ENCODE measurements at regions of chr10 and their contacts with region 1.

Region 1: DNA sequence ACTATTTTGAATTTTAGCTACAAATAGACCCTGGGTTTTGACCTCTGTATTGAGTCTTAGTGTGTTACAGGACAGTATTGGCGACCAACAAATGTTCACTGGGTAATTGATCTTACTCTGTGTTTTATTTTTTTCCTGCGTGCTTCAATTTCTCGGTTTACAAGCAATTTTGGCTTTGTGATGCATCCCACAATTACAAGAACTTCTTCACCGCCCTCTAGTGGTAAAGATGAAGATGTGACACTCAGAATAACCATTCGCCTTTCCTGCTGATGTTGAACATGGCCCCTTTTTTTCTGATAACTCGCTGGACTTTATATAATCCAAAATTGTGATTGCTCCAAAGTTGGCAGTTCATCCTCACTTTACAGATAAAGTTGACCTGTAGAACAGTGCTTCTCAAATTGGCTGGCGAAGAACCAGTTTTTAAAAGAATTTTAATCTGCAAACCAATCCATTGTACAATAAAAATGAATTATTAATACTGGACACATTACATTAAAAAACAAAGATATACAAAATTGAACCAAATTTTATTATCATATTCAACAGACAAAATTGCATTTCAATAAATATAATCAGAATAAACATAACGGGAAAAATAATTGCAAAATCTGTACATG is 20.2 kb upstream of the SMC3 start:
- DNase-seq: no peak
- H3K4me3 Mint-ChIP-seq: no peak overlapping the region
- H3K27ac Mint-ChIP-seq: no peak overlapping the region
- H3K4me1 Mint-ChIP-seq: peaks cover 7% of the 10 kb centered on the region
- H3K27me3 Mint-ChIP-seq: peaks cover 25% of the 10 kb centered on the region

Region 2: GRCh38 chr10:110304780-110305421 is 242.3 kb before region 1 on chr10 and contains the start of gene SMNDC1:
- CTCF ChIA-PET with region 1: interaction called, 120 read pairs
- DNase-seq: peak; percentile 98
- H3K4me3 Mint-ChIP-seq: peak within 1 kb of the TSS; percentile 93
- H3K27ac Mint-ChIP-seq: peak within 1 kb of the TSS; percentile 98
- H3K4me1 Mint-ChIP-seq: peaks cover 53% of the 10 kb centered on the region
- H3K27me3 Mint-ChIP-seq: no peaks in the 10 kb centered on the region

Region 3: GRCh38 chr10:110311357-110311949 is 235.8 kb before region 1 on chr10:
- CTCF ChIA-PET with region 1: interaction called, 120 read pairs
- DNase-seq: peak; percentile 59
- H3K4me3 Mint-ChIP-seq: no peak overlapping the region
- H3K27ac Mint-ChIP-seq: no peak overlapping the region
- H3K4me1 Mint-ChIP-seq: peaks cover 26% of the 10 kb centered on the region
- H3K27me3 Mint-ChIP-seq: peaks cover 8% of the 10 kb centered on the region

Region 4: GRCh38 chr10:110600487-110601101 is 53.3 kb after region 1 on chr10:
- CTCF ChIA-PET with region 1: no interaction called
- DNase-seq: peak; percentile 50
- H3K4me3 Mint-ChIP-seq: no peak overlapping the region
- H3K27ac Mint-ChIP-seq: no peak overlapping the region
- H3K4me1 Mint-ChIP-seq: no peaks in the 10 kb centered on the region
- H3K27me3 Mint-ChIP-seq: no peaks in the 10 kb centered on the region